Activated CD4-positive, alpha-beta T cell treated with anti-CD3 and anti-CD28 coated beads, Interleukin-2, amount 10 ng/mL, durations not matched to agents 24 days and 14 days (primary cell): ENCODE measurements at regions of chr20 and their contacts with region 1.

Region 1: DNA sequence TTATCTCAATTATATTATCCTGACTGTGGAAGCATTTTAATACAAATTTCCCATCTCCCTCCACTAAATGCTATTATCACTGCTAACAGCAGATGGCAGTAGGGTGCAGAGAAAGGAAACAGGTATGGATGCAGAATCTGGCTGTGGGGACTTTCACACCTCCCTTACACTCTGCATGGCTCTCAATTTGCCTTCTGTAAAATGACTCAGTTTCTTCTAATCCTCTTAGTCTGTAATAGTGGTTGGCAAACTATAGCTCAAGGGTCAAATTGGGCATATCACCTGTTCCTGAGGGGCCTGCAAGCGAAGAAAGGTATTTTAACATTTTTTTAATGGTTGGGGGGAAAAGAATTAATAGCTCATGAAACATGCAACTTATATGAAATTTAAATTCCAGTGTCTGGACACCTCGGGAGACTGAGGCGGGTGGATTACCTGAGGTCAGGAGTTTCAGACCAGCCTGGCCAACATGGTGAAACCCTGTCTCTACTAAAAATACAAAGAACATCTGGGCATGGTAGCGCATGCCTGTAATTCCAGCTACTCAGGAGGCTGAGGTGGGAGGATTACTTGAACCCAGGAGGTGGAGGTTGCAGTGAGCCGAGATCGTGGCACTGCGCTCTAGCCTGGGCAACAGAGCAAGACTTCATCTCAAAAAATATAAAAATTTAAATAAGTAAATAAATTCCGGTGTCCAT is 83.5 kb downstream of the ZMYND8 start:
- DNase-seq: peak; percentile 90
- H3K4me3 Mint-ChIP-seq: peak overlapping the region; percentile 74
- H3K27ac Mint-ChIP-seq: peak overlapping the region; percentile 96
- H3K4me1 Mint-ChIP-seq: peaks cover 37% of the 10 kb centered on the region
- H3K27me3 Mint-ChIP-seq: no peaks in the 10 kb centered on the region

Region 2: DNA sequence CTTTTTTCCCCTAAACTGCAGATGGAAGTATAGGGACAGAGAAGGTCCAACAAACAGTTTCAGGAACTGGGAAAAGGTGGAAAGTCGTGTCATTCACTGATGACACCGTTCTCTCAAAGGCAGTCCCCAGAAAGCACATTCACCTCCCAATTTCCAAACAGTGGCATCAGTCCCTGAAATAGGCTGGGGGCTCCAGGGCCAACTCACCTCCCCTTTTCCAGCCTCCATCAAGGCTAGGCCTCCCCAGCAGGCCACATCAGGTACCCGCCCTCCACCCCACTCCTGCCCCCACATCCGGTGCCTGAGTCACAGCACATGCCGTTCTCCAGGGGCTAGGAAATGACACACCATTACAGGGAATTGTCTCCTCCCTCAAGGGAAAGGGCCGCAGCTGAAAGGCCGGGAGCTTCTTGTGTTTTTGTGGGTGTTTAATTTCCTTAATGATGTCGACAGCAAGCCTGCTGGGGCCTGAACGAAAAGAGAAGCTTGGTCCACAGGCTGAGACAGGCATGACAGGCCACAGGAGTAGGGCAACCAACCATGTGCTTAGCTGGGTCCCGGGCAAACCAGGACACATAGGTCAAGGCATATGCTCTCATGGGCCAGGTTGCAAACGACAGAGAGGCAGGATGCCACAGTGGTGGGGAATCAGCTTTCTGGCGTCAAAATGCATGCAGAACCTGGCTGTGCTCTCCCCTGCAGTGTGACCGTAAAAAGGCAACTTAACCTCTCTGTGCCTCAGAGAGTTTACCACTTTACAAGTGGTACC is 44.3 kb after region 1 on chr20:
- intact Hi-C with region 1: loop called (anchors 1 kb)
- DNase-seq: peak; percentile 82
- H3K4me3 Mint-ChIP-seq: peak overlapping the region; percentile 63
- H3K27ac Mint-ChIP-seq: peak overlapping the region; percentile 91
- H3K4me1 Mint-ChIP-seq: peaks cover 47% of the 10 kb centered on the region
- H3K27me3 Mint-ChIP-seq: no peaks in the 10 kb centered on the region

Region 3: DNA sequence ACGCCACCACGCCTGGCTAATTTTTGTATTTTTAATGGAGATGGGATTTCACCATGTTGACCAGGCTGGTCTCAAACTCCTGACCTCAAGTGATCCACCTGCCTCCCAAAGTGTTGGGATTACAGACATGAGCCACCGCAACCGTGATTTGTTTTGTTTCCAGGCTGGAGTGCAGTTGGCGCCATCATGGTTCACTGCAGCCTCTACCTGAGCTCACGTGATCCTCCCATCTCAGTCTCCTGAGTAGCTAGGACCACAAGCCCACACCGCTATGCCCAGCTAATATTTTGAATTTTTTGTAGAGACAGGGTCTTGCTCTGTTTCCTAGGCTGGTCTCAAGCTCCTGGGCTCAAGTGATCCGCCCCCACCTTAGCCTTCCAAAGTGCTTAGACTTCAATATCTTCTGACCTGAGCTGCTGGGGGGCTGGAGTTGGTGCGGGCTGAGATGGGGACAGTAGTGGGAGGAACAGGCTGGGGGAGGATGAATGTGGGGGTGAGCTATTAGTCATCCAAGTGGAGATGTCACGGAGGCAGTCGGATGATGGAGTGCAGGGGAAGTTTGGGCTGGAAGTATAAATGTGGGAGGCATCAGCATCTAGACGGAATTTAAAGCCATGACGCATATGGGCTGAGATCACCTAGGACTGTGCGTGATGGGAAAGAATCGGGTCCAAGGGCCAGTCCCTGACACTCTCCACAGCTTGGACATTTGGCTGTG is 106.5 kb after region 1 on chr20:
- intact Hi-C with region 1: loop called (anchors 1 kb)
- DNase-seq: no peak
- H3K4me3 Mint-ChIP-seq: peak overlapping the region; percentile 30
- H3K27ac Mint-ChIP-seq: peak overlapping the region; percentile 80
- H3K4me1 Mint-ChIP-seq: peaks cover 24% of the 10 kb centered on the region
- H3K27me3 Mint-ChIP-seq: no peaks in the 10 kb centered on the region

Region 4: GRCh38 chr20:47428164-47428563 is 155.1 kb after region 1 on chr20:
- intact Hi-C with region 1: no loop called
- DNase-seq: no peak
- H3K4me3 Mint-ChIP-seq: no peak overlapping the region
- H3K27ac Mint-ChIP-seq: no peak overlapping the region
- H3K4me1 Mint-ChIP-seq: no peaks in the 10 kb centered on the region
- H3K27me3 Mint-ChIP-seq: peaks cover 2% of the 10 kb centered on the region

Region 5: DNA sequence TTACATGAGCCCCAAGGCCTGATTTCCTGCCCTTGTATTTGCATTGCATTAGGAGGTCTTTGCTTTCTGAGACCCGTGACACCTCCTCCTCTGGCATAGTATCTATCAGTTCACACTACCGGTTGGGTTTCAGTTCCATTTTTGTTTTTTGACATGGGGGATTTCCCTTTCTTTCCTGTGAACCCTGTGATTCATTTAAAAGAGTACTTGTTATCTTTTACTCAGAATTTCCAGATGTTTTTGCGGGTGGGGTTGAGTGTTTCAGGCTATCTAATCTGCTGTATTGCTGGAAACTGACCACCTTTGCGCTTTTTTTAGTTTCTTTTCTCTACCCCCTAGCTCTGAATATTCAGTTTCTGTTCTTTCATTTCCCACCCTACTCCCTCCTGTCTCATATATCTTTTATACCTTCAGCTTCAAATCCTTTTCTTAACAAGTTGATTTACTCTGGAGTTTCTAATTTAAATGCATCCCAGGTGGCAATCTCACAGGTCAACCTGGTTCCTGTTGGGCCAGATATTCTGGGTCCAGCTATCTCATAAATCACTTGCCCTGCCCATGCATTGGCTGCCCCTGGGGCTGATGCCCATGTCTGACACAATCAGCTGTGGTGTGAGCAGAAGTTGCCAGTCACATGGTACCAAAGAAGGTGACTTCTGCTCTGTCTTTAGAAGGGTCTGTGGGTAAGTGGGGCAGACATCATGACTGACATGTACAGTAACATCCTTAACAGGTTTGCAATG is 214.3 kb after region 1 on chr20:
- intact Hi-C with region 1: loop called (anchors 1 kb)
- DNase-seq: peak; percentile 92
- H3K4me3 Mint-ChIP-seq: peak overlapping the region; percentile 72
- H3K27ac Mint-ChIP-seq: peak overlapping the region; percentile 99
- H3K4me1 Mint-ChIP-seq: peaks cover 43% of the 10 kb centered on the region
- H3K27me3 Mint-ChIP-seq: no peaks in the 10 kb centered on the region